Activated CD8-positive, alpha-beta T cell treated with anti-CD3 and anti-CD28 coated beads for 36 hours (primary cell): ENCODE measurements at regions of chr6 and their contacts with region 1.

Region 1: GRCh38 chr6:29964887-29965562 is 22.7 kb downstream of the HLA-A start:
- DNase-seq: peak; percentile 82
- ATAC-seq: peak; percentile 97
- H3K4me3 Mint-ChIP-seq: peak overlapping the region; percentile 57
- H3K27ac Mint-ChIP-seq: peak overlapping the region; percentile 83
- H3K4me1 Mint-ChIP-seq: peaks cover 26% of the 10 kb centered on the region
- H3K27me3 Mint-ChIP-seq: no peaks in the 10 kb centered on the region
- CTCF ChIP-seq: no peak

Region 2: GRCh38 chr6:29947077-29947980 is 17.7 kb before region 1 on chr6:
- CTCF ChIA-PET with region 1: no interaction called
- POLR2A ChIA-PET with region 1: interaction called, 10 read pairs
- intact Hi-C with region 1: no loop called
- DNase-seq: no peak
- ATAC-seq: no peak
- H3K4me3 Mint-ChIP-seq: peak overlapping the region; percentile 96
- H3K27ac Mint-ChIP-seq: peak overlapping the region; percentile 53
- H3K4me1 Mint-ChIP-seq: peaks cover 37% of the 10 kb centered on the region
- H3K27me3 Mint-ChIP-seq: no peaks in the 10 kb centered on the region
- CTCF ChIP-seq: no peak

Region 3: DNA sequence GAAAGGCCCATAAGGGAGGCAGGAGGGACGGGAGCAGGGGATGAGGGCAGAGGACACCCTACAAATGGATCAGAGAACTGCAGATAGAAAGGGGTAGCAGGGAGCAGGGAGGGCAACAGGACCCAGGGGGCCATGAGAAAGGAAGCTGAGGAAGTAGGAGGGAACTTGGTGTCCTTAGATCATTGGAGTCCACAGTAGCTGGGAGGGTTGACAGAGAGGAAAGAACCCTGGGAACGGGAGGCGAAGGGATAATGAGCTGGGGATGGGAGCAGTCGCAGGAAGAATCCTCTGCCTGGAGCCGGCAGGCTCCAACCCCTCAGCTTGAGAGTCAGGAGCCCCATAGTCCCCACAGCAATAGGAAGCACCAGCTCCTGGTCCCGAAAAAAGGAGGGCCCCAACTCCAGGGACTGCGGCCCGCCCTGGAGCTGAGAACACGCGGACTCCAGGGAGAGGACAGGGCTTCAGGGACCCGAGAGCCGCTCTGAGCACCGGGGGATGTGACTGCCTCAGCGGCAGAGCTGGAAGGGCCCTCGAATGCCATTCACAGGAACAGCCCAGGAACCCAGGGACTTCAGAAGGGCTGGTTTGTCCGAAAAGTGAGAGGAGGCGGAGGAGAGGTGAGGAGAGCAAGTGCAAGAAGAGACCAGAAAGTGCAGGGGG is 10.0 kb after region 1 on chr6:
- CTCF ChIA-PET with region 1: interaction called, 3 read pairs
- POLR2A ChIA-PET with region 1: interaction called, 10 read pairs
- intact Hi-C with region 1: no loop called
- DNase-seq: no peak
- ATAC-seq: peak; percentile 10
- H3K4me3 Mint-ChIP-seq: peak overlapping the region; percentile 5
- H3K27ac Mint-ChIP-seq: no peak overlapping the region
- H3K4me1 Mint-ChIP-seq: peaks cover 23% of the 10 kb centered on the region
- H3K27me3 Mint-ChIP-seq: peaks cover 36% of the 10 kb centered on the region
- CTCF ChIP-seq: no peak